Calu3 (cell line): ENCODE measurements at regions of chr13 and their contacts with region 1.

Region 1: GRCh38 chr13:90135558-90135957 is 1211.9 kb upstream of the MIR17HG start:
- DNase-seq: no peak
- H3K4me3 Mint-ChIP-seq: no peak overlapping the region
- H3K27ac Mint-ChIP-seq: no peak overlapping the region
- H3K4me1 Mint-ChIP-seq: no peaks in the 10 kb centered on the region
- H3K27me3 Mint-ChIP-seq: no peaks in the 10 kb centered on the region
- CTCF ChIP-seq: no peak

Region 2: GRCh38 chr13:89650226-89650625 is 485.3 kb before region 1 on chr13:
- CTCF ChIA-PET with region 1: no interaction called
- intact Hi-C with region 1: no loop called
- DNase-seq: no peak
- H3K4me3 Mint-ChIP-seq: no peak overlapping the region
- H3K27ac Mint-ChIP-seq: no peak overlapping the region
- H3K4me1 Mint-ChIP-seq: no peaks in the 10 kb centered on the region
- H3K27me3 Mint-ChIP-seq: no peaks in the 10 kb centered on the region
- CTCF ChIP-seq: no peak

Region 3: DNA sequence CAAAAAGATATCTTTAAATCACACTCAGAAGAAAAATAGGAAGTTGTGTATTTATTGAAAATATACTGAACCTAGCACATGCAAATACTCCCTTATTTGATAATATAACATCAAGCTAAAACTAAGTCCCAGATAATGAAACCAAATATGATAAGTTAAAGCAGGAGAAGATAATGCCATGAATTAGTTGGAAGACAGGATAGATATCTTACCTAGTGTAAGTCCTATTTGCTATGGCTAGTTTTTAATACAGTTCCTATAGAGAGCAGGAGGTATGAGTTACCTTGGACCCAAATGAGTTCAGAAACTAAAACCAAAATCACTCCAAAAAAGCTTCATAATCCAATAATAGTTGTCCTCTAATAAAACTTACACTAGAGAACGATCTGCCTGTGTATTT is 195.2 kb before region 1 on chr13:
- CTCF ChIA-PET with region 1: no interaction called
- intact Hi-C with region 1: loop called (anchors 5 kb)
- DNase-seq: no peak
- H3K4me3 Mint-ChIP-seq: no peak overlapping the region
- H3K27ac Mint-ChIP-seq: no peak overlapping the region
- H3K4me1 Mint-ChIP-seq: no peaks in the 10 kb centered on the region
- H3K27me3 Mint-ChIP-seq: no peaks in the 10 kb centered on the region
- CTCF ChIP-seq: no peak

Region 4: DNA sequence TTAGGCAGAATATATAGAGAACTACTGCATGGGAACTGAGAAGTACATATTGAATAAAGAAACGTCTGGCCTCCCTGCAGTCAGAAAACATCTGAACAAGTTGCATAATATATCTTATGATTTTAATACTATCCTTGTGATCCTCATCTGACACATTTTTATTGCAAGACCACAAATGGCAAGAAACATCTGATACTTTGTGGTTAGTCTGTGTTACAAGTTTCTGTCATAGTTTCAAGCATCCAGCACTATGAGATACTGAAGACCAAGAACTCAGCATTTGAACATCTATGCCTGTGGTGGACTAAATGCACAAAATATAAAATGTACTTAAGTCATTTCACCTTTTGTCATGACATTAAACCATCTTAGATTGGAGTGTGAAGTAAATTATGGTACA is 36.1 kb after region 1 on chr13:
- CTCF ChIA-PET with region 1: no interaction called
- intact Hi-C with region 1: no loop called
- DNase-seq: no peak
- H3K4me3 Mint-ChIP-seq: no peak overlapping the region
- H3K27ac Mint-ChIP-seq: no peak overlapping the region
- H3K4me1 Mint-ChIP-seq: no peaks in the 10 kb centered on the region
- H3K27me3 Mint-ChIP-seq: no peaks in the 10 kb centered on the region
- CTCF ChIP-seq: no peak